ENCODE measurements at regions of chr16 and their contacts with region 1.

Region 1: GRCh38 chr16:70470927-70471341 is 16.5 kb downstream of the FCSK start:
- DNase-seq: peak; percentile 35 to 65
- ATAC-seq: peak in 1 of 2 donors; percentile 20
- H3K4me3 ChIP-seq: no peak overlapping the region
- H3K27ac ChIP-seq: no peak overlapping the region
- H3K4me1 ChIP-seq: peaks cover 10 to 16% of the 10 kb centered on the region in 2 donors
- H3K27me3 ChIP-seq: no peaks in the 10 kb centered on the region
- CTCF ChIP-seq: peak; percentile 42 to 61 (median 51)
- POLR2A ChIP-seq: no peak

Region 2: DNA sequence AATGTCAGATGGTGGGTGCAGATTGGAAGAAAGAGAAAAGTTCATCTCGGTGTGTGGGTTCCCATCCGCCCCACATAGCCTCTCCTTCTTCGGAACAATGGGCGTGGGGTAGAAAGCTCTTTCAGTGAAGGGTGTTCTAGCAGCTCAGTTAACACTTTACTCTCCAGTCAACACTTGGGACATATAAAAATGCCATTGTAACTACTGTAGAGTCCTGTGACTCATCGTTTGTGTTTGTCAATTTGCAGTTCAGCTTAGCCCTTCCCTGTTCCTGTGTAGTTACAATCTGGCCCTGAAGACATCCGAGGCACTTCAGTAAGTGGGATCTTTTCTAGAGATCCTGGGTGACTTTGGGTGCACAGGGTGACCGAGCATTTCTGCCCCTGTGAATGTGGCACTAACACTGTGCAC is 308.9 kb before region 1 on chr16:
- in situ Hi-C with region 1: no loop called
- intact Hi-C with region 1: no loop called
- DNase-seq: no peak
- ATAC-seq: no peak
- H3K4me3 ChIP-seq: no peak overlapping the region
- H3K27ac ChIP-seq: no peak overlapping the region
- H3K4me1 ChIP-seq: no peaks in the 10 kb centered on the region
- H3K27me3 ChIP-seq: no peaks in the 10 kb centered on the region
- CTCF ChIP-seq: no peak
- POLR2A ChIP-seq: no peak

Region 3: DNA sequence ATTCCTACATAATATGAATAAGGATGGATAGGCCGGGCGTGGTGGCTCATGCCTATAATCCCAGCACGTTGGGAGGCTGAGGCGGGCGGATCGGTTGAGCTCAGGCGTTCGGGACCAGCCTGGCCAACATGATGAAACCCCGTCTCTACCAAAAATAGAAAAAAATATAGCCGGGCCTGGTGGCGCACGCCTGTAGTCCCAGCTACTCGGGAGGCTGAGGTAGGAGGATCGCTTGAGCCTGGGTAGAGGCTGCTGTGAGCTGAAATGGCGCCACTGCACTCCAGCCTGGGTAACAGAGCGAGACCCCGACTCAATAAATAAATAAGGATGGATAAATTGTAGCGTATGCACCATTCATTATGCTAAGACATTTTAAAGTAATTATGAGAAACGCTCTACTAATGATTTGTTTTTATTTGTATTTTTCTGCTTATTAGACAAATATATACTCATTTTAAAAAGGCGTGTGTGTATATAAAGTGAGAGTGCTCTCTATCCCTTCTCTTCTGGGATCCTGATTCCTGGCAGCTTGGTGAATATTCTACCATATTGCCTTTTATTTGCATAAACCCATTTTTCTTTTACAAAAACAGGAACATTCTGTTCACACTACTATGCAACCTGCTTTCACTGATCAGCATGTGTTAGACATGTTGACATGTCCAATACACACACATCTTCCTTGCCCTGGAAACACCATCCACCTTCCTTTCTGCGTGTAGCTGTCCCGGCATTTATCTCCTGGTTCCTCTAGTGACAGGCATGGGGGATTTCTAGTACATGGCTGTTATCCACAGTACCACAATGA is 97.8 kb before region 1 on chr16:
- in situ Hi-C with region 1: no loop called
- intact Hi-C with region 1: loop called (anchors 5 kb)
- DNase-seq: no peak
- ATAC-seq: no peak
- H3K4me3 ChIP-seq: no peak overlapping the region
- H3K27ac ChIP-seq: peak overlapping the region in 2 of 4 donors; percentile 71 to 82
- H3K4me1 ChIP-seq: peaks cover 7 to 17% of the 10 kb centered on the region in 2 donors
- H3K27me3 ChIP-seq: no peaks in the 10 kb centered on the region
- CTCF ChIP-seq: no peak
- POLR2A ChIP-seq: no peak

Region 4: DNA sequence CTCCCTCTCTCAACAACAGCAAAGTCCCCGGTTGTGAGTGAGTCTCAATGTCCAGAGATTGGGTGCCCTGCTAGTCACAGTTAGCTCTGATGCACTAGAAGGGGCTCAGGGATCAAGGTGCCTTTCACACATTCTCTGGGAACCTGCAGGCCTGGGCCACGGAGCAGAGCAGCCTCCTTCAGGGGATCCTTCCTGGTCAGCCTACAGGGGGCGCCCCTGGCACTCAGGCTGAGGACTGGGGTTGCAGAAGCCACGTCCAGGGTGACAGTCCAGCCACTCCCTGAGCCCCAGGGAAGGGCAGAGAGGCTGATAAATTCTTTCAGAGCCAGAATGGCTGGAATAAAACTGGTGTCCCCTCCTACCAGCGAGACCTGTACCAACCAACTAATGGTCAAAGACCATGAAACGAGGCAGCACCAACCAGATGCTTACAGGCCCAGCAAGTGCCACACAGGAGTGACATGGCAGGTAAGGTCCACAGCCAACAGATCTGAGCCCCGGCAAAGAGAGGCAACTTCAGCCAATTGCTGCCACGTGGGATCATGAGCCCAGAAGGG is 75.5 kb before region 1 on chr16:
- in situ Hi-C with region 1: no loop called
- intact Hi-C with region 1: loop called (anchors 2 kb)
- DNase-seq: peak; percentile 29 to 65
- ATAC-seq: peak in 1 of 2 donors; percentile 47
- H3K4me3 ChIP-seq: no peak overlapping the region
- H3K27ac ChIP-seq: no peak overlapping the region
- H3K4me1 ChIP-seq: peaks cover 19 to 20% of the 10 kb centered on the region in 2 donors
- H3K27me3 ChIP-seq: no peaks in the 10 kb centered on the region
- CTCF ChIP-seq: peak; percentile 60 to 81 (median 69)
- POLR2A ChIP-seq: no peak

Region 5: GRCh38 chr16:70508752-70509151 is 37.8 kb after region 1 on chr16:
- in situ Hi-C with region 1: no loop called
- intact Hi-C with region 1: no loop called
- DNase-seq: no peak
- ATAC-seq: no peak
- H3K4me3 ChIP-seq: no peak overlapping the region
- H3K27ac ChIP-seq: no peak overlapping the region
- H3K4me1 ChIP-seq: peaks cover 0 to 4% of the 10 kb centered on the region in 2 donors
- H3K27me3 ChIP-seq: no peaks in the 10 kb centered on the region
- CTCF ChIP-seq: no peak
- POLR2A ChIP-seq: no peak